ENCODE measurements at regions of chr14 and their contacts with region 1.

Region 1: GRCh38 chr14:80996049-80996901 is 40.9 kb downstream of the TSHR start:
- DNase-seq: no peak
- H3K4me3 ChIP-seq: no peak overlapping the region
- H3K27ac ChIP-seq: no peak overlapping the region
- H3K4me1 ChIP-seq: peaks cover 0 to 2% of the 10 kb centered on the region in 2 donors
- H3K27me3 ChIP-seq: no peaks in the 10 kb centered on the region
- CTCF ChIP-seq: peak; percentile 50 to 65 (median 52)

Region 2: GRCh38 chr14:81170104-81170828 is 174.0 kb after region 1 on chr14:
- intact Hi-C with region 1: loop called (anchors 2 kb)
- DNase-seq: peak; percentile 82 to 95
- H3K4me3 ChIP-seq: peak overlapping the region; percentile 73 to 78
- H3K27ac ChIP-seq: peak overlapping the region; percentile 85 to 92
- H3K4me1 ChIP-seq: peaks cover 0 to 10% of the 10 kb centered on the region in 2 donors
- H3K27me3 ChIP-seq: no peaks in the 10 kb centered on the region
- CTCF ChIP-seq: peak; percentile 56 to 90 (median 87)